ENCODE measurements at regions of chr1 and their contacts with region 1.

Region 1: GRCh38 chr1:97529600-97529999 is 391.2 kb downstream of the DPYD start:
- DNase-seq: no peak
- H3K4me3 Mint-ChIP-seq: no peak overlapping the region
- H3K27ac Mint-ChIP-seq: no peak overlapping the region
- H3K4me1 Mint-ChIP-seq: peaks cover 29% of the 10 kb centered on the region
- H3K27me3 Mint-ChIP-seq: no peaks in the 10 kb centered on the region
- CTCF ChIP-seq: no peak

Region 2: DNA sequence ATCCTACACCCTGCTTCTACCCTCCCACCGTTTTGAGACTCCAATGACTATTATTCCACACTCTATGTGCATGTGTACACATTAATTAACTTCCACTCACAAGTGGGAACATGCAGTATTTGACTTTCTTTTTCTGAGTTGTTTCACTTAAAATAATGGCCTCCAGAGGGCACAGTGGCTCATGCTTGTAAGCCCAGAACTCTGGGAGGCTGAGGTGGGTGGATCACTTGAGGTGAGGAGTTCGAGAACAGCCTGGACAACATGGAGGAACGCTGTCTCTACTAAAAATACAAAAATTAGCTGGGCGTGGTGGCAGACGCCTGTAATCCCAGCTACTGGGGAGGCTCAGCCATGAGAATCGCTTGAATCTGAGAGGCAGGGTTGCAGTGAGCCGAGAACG is 343.2 kb before region 1 on chr1:
- CTCF ChIA-PET with region 1: no interaction called
- intact Hi-C with region 1: loop called (anchors 5 kb)
- DNase-seq: peak; percentile 2
- H3K4me3 Mint-ChIP-seq: no peak overlapping the region
- H3K27ac Mint-ChIP-seq: no peak overlapping the region
- H3K4me1 Mint-ChIP-seq: peaks cover 10% of the 10 kb centered on the region
- H3K27me3 Mint-ChIP-seq: no peaks in the 10 kb centered on the region
- CTCF ChIP-seq: no peak

Region 3: DNA sequence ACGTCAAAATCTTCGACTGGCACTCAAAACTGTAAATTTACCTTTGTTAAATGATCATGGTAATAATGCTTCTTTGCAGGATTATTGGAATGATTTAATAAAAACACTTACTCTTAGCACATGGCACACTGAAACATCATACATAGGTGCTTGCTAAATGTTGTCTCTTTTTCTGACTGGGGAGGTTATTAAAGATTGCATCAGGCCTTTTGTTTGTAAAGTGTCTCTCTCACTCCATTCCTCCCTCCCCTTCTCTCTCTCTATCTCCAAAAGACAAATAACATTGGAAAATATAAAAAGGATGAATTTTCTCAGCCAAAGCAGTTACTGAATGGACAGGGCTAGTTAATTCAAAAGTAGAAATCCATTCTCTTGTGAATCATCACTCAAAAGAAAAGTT is 13.0 kb before region 1 on chr1:
- CTCF ChIA-PET with region 1: no interaction called
- intact Hi-C with region 1: no loop called
- DNase-seq: no peak
- H3K4me3 Mint-ChIP-seq: no peak overlapping the region
- H3K27ac Mint-ChIP-seq: no peak overlapping the region
- H3K4me1 Mint-ChIP-seq: no peaks in the 10 kb centered on the region
- H3K27me3 Mint-ChIP-seq: no peaks in the 10 kb centered on the region
- CTCF ChIP-seq: no peak

Measured in Calu3 (cell line).